ENCODE measurements at regions of chr17 and their contacts with region 1.

Region 1: DNA sequence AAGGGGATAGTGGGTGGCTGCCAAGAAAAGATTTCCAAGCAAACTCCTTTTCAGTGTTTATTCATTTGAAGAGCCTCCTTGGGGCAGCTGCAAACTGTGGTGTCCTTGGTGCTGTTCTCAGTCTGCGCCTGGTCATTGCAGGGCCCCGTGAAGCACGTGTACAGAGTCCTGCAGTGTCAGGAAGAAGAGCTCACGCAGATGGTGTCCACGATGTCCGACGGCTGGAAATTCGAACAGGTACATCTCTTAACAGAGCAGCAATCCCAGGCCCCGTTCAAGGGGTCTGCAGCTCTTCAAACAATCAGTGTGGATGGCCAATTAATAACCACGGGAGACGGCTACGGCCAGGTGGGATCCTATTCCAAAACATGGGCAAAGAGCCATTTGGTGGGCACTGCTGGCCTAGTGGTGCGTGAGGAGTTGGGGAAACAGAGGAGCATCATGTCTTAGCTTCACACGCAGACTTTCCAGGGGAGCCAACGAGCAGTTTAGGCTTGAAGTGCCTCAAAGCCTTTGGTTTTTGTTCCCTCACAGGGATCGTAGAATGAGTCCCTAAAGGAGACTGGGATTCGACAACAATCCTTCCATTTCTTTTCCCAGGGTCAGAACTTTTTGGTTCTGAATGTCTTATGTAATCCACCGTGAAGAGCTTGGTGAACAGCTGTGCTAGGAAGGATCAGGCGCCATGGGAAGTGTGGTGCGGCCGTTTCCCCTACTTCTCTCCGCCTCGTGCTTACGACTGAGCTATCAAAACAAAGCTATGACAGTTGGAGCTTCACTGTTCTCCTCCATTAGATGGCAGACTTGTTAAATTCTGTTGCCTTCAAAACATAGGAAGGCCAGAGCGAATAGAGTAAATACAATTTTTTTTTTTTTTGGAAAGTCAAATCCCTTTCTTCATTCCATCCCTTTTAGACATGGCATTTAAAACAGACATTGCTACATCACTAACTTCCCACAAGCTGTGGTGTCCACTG is 12.6 kb downstream of the KCTD2 start:
- H3K4me3 Mint-ChIP-seq: no peak overlapping the region
- H3K27ac Mint-ChIP-seq: no peak overlapping the region
- H3K4me1 Mint-ChIP-seq: peaks cover 13% of the 10 kb centered on the region
- H3K27me3 Mint-ChIP-seq: no peaks in the 10 kb centered on the region

Region 2: GRCh38 chr17:75006653-75007052 is 53.0 kb before region 1 on chr17:
- intact Hi-C with region 1: no loop called
- H3K4me3 Mint-ChIP-seq: no peak overlapping the region
- H3K27ac Mint-ChIP-seq: peak overlapping the region; percentile 26
- H3K4me1 Mint-ChIP-seq: peaks cover 24% of the 10 kb centered on the region
- H3K27me3 Mint-ChIP-seq: peaks cover 19% of the 10 kb centered on the region

Region 3: DNA sequence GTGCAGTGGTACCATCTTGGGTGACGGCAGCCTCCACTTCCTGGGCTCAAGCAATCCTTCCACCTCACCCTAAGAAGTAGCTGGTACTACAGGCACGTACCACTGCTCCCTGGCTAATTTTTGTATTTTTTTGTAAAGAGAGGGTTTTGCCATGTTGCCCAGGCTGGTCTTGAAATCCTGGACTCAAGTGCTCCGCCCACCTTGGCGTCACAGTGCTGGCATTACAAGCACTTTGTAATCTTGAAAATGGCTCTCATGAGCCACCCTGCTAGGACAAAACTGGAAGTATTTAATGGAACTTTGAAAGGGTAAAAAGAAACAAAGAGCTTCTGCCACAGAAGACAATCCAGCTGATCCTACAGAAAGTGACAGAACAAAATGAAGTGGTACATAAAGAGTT is 113.9 kb after region 1 on chr17:
- intact Hi-C with region 1: loop called (anchors 10 kb)
- H3K4me3 Mint-ChIP-seq: no peak overlapping the region
- H3K27ac Mint-ChIP-seq: no peak overlapping the region
- H3K4me1 Mint-ChIP-seq: no peaks in the 10 kb centered on the region
- H3K27me3 Mint-ChIP-seq: no peaks in the 10 kb centered on the region

Region 4: DNA sequence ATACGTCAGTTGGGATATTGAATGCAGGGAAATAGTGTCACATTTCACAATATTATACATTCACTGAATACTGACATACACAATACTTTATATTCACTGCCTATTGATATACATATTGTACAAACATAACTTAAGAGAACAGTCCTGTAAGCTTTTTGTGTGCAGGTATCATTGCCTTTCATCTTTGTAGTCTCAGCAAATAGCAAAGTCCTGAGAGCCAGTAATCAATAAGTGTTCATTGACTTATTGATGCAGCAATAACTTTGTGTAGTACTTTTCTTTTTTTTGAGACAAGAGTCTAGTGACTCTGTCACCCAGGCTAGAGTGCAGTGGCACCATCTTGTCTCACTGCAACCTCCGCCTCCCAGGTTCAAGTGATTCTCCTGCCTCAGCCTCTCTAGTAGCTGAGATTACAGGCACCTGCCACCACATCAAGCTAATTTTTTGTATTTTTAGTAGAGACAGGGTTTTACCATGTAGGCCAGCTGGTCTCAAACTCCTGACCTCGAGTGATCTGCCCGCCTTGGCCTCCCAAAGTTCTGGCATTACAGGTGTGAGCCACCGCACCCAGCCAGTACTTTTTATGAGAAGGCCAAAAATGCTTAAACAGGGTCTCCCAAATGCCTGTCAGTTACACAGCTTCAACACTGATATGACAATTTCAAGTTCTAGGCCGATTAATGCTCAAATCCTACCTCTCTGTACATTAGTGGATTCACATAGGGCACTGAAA is 140.4 kb after region 1 on chr17:
- intact Hi-C with region 1: loop called (anchors 5 kb)
- H3K4me3 Mint-ChIP-seq: no peak overlapping the region
- H3K27ac Mint-ChIP-seq: no peak overlapping the region
- H3K4me1 Mint-ChIP-seq: peaks cover 16% of the 10 kb centered on the region
- H3K27me3 Mint-ChIP-seq: no peaks in the 10 kb centered on the region

Measured in dendritic cell treated with granulocyte-macrophage colony-stimulating factor and Interleukin-4, amounts not matched to agents 40 ng/mL and 50 ng/mL, for 4 days (primary cell).